Cardiac septum (tissue), 1 donor: ENCODE measurements at regions of chr3 and their contacts with region 1.

Region 1: GRCh38 chr3:177615015-177615414 is 417.7 kb upstream of the TBL1XR1 start:
- DNase-seq: peak; percentile 88

Region 2: DNA sequence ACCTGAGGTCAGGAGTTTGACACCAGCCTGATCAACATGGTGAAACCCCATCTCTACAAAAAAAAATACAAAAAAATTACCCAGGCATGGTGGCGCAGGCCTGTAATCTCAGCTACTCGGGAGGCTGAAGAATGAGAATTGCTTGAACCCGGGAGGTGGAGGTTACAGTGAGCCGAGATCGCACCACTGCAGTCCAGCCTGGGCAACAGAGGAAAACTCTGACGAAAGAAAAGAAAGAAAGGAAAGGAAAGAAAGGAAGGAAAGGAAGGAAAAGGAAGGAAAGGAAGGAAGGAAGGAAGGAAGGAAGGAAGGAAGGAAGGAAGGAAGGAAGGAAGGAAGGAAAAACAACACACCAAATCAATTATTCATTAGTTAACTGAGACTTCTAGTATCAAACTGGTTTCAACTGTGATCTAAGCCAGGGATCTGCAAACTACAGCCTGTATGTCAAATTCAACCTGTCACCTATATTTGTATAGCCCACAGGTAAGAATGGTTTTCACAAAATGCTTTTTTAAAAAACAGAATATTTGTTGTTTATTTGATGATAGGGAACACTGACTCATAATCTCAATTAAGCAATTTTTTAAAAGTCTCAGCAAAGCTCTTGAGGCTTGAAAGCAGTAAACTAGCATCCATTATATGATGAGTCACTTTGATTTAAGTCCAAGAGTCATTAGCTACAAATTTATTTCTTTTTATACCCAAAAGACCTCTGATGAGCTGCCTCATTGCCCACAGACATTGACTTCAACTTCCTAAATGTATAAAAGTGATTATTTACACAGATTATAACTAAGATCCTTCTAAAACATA is 545.3 kb before region 1 on chr3:
- intact Hi-C with region 1: loop called (anchors 10 kb)
- DNase-seq: no peak

Region 3: DNA sequence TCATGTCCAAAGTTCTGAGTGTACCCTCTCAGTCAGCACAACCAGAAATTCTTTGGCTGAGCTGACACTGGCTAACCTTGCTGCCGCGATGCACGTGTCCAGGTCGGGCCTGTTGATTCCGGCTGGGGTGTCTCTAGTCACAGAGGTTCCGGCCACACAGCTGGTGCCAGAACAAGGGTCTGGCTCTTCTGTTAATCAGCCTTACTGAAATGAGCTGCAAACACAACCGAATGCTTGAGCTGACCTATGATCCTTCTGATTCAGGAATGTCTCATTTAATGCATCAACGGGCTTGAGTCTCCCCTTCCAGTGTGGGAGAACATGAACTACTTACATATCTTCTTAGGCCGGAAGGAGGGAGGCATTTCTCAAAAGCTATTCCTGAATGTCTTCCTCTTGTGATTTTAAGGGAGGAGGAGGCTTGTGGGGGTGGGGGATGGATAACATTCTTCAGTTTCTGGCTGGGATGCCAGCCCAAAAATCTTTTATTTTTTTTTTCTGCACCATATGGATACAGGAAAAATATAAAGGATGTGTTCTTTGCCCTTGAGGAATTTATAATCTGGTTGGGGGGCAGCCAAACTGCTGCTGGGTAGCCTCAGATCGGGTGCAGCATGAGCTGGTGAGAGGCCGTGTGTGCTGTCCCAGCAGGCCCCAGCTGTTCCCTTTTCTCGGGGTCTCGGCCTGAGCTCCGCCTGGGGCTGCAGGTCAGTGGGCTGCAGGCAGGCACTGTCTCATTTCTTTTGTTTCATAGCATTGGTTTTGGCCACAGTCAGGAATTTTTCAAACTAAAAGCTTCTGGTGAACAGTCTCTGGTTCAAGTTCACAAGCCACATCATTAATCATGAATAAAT is 98.6 kb before region 1 on chr3:
- intact Hi-C with region 1: no loop called
- DNase-seq: peak; percentile 80

Region 4: GRCh38 chr3:177777699-177778098 is 162.7 kb after region 1 on chr3:
- intact Hi-C with region 1: no loop called
- DNase-seq: no peak